Sigmoid colon (tissue), 7 donors: ENCODE measurements at regions of chr11 and their contacts with region 1.

Region 1: DNA sequence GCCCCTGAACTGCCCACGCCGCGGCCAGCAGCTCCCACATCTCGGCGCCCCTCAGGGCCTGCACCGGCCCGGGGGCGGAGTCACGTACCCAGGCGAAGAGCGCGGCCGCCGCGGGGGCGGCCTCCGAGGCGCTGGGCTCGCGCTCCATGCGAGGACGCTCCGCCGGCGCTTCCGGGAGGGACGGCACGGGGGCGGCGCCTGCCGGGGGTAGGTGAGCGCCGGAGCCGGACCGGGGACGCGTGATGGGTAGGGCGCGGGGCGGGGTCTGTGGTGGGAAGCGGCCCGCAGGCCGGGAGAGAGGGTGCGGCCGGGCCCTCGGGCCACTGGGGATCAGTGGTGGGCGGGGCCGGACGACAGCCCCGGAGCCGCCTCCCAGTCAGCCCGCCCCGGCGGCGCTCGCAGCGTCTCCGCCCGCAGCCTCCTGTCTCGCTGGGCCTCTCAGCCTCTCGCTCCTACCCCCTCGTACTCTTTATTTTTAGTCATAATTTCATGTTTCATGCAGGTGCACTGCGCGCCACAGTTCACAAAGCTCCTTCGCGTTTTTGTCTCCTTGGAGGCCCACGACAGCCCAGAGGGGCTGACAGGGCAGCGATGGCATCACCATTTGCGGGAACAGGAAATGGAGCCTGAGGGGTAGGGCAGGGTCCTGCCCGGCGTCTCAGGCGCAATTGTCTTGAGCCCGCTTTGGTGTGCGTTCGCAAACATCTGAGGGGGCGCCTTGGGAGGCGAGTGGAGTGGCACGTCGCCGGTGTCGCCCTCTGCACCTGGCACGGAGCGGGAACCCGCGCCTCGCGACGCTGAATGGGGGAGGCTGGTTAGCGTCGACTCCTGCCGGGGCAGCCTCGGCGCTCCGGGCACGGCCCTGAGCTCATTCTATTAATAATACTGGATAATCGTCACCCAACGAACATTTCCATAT is at the start of gene SERGEF:
- DNase-seq: peak; percentile 95
- H3K4me3 ChIP-seq: peak within 1 kb of the TSS; percentile 60 to 91 (median 76)
- H3K27ac ChIP-seq: peak within 1 kb of the TSS; percentile 84 to 89 (median 86)
- H3K4me1 ChIP-seq: peaks cover 0 to 16% (median 9%) of the 10 kb centered on the region in 4 donors
- H3K27me3 ChIP-seq: no peaks in the 10 kb centered on the region
- CTCF ChIP-seq: peak in 1 of 4 experiments; percentile 10
- EP300 ChIP-seq: no peak
- POLR2A ChIP-seq: peak; percentile 58 to 80
- total RNA-seq, gene SERGEF: 28.8 to 50.4 (median 44.6) TPM

Region 2: GRCh38 chr11:18036456-18036855 is 23.3 kb after region 1 on chr11:
- intact Hi-C with region 1: no loop called
- DNase-seq: no peak
- H3K4me3 ChIP-seq: no peak overlapping the region
- H3K27ac ChIP-seq: no peak overlapping the region
- H3K4me1 ChIP-seq: no peaks in the 10 kb centered on the region
- H3K27me3 ChIP-seq: no peaks in the 10 kb centered on the region
- CTCF ChIP-seq: no peak
- EP300 ChIP-seq: no peak
- POLR2A ChIP-seq: no peak

Region 3: DNA sequence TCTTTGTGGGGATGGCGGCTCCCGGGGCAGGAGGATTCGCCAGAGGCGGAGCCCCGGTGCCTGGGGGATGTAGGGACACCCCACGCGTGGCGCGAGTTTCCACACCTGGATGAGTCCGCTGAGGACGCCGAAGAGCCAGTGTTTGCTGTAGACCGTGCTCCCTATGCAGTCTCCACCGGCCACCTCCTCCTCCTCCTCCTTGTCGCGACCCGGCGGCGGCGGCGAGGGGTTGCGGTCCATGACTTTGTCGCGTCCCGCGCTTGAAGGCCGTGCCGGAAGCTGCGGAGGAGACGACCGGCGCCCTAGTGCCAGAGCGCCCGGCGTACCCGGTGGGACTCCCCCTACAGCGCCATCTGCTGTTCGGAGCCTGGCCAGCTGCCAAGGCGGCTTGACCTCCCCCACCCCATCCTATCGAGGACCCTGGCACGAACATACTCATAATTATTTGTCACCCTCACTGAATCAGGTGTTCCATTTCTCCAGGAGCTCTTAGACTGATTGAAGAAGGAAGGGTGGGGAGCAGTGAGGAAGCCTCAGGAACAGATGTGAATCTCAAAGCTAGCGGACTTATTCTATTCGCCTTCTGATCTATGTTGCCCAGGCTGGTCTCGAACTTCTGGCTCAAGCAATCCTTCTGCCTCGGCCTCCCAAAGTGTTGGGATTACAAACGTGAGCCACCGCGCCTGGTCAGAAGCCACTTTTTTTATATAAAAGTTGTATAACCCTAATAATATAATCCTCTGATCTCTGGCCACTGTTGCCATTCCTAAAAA is 92.9 kb after region 1 on chr11 and contains the start of gene SAAL1:
- intact Hi-C with region 1: loop called (anchors 2 kb)
- DNase-seq: peak; percentile 89
- H3K4me3 ChIP-seq: peak within 1 kb of the TSS; percentile 73 to 85 (median 82)
- H3K27ac ChIP-seq: peak within 1 kb of the TSS; percentile 55 to 75 (median 72)
- H3K4me1 ChIP-seq: peaks cover 0 to 22% (median 12%) of the 10 kb centered on the region in 4 donors
- H3K27me3 ChIP-seq: no peaks in the 10 kb centered on the region
- CTCF ChIP-seq: peak; percentile 18 to 41 (median 37)
- EP300 ChIP-seq: no peak
- POLR2A ChIP-seq: peak; percentile 37 to 43
- total RNA-seq, gene SAAL1: 8.7 to 14.4 (median 11.0) TPM

Region 4: DNA sequence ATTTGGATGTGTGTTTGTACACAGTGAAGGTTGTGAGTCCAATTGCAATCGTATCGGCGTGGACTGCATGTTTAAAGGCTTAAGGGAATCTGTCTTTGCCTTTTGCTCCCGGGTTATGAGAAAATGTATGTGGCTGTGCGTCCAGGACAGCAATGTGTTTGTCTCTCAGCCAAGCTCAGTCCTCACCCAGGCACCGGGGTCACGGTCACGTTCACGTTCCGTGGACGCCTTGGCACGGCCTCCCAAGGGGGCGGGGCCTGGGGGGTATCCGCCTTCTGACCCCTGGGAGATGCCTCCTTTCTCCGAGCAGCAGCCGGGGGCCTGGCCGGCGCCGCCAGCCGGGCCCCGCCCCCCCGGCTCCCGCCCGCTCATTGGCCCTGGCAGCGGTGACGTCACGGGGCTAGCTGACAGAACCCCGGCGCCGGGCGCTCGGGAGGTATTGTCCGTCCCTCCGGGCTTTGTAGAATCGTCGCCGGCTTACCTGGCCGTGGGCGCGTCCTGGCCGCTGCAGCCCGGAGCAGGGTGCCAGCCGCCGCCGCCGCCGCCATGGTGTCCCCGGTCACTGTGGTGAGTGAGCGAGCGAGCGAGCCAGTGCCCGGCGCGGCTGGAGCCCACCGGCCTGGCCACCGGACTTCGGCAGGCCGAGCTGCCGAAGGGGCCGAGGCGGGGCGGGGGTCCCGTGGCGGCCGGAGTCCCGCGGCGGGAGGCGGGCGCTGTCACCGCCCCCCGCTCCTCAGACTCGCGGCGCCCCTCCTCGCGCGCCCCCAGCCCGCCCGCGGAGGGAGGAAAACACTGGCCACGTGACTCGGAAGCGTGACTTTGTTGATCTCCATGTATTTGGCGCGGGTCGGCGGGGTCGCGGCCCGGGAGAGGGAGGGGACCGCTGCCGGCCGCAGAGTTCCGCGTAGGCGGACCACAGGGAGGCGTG is 685.5 kb after region 1 on chr11 and contains the start of gene TMEM86A:
- intact Hi-C with region 1: loop called (anchors 10 kb)
- DNase-seq: peak; percentile 97
- H3K4me3 ChIP-seq: peak within 1 kb of the TSS; percentile 62 to 98 (median 78)
- H3K27ac ChIP-seq: peak within 1 kb of the TSS; percentile 76 to 82 (median 77)
- H3K4me1 ChIP-seq: peaks cover 3 to 18% (median 15%) of the 10 kb centered on the region in 4 donors
- H3K27me3 ChIP-seq: no peaks in the 10 kb centered on the region
- CTCF ChIP-seq: no peak
- EP300 ChIP-seq: no peak
- POLR2A ChIP-seq: peak in 1 of 2 donors; percentile 43
- total RNA-seq, gene TMEM86A: 3.7 to 5.3 (median 4.8) TPM